Motor neuron (in vitro differentiated cells): ENCODE measurements at regions of chr17 and their contacts with region 1.

Region 1: GRCh38 chr17:66715745-66716156 is 119.2 kb upstream of the CACNG5 start:
- ATAC-seq: peak; percentile 57 to 88 (median 64)
- H3K4me3 ChIP-seq: no peak overlapping the region
- H3K27ac ChIP-seq: peak overlapping the region; percentile 59 to 77
- H3K4me1 ChIP-seq: peaks cover 48 to 50% of the 10 kb centered on the region in 2 donors

Region 2: DNA sequence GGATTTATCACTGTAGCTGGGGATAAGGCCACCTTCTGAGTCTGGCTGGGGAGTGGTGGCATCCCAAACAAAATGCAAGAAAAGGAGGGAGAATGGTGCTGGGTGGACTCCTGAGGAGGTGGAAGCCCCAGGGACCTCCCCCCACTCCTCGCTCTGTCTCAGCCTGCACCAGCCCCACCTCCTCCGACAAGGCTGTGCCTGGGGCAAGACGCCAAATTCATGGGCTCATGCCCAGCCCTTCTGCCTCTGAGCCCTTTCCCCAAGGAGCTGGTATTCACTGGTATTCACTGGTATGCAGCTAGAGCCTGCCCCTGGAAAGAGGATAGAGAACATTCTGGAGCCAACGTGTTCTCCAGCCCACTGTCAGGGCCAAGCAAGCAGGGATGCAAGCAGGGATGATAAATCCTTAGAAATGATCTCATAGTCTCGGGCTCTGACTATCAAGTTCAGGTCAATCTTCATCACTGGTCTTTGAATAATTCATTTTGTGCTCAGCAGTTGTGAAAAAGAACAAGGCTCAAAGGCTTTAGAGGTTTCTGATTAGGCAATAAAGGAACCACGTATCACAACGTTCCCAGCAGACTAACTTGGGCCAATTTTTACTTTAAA is 176.4 kb after region 1 on chr17:
- in situ Hi-C with region 1: loop called in 2 of 9 experiments (anchors 10 kb)
- ATAC-seq: peak; percentile 96 to 99 (median 98)
- H3K4me3 ChIP-seq: no peak overlapping the region
- H3K27ac ChIP-seq: peak overlapping the region; percentile 62 to 79
- H3K4me1 ChIP-seq: peaks cover 6 to 13% of the 10 kb centered on the region in 2 donors

Region 3: GRCh38 chr17:66906321-66907278 is 190.8 kb after region 1 on chr17:
- in situ Hi-C with region 1: loop called in 3 of 9 experiments (anchors 10 to 25 kb)
- ATAC-seq: peak in 7 of 8 experiments; percentile 33 to 69 (median 60)
- H3K4me3 ChIP-seq: no peak overlapping the region
- H3K27ac ChIP-seq: no peak overlapping the region
- H3K4me1 ChIP-seq: peaks cover 21 to 28% of the 10 kb centered on the region in 2 donors

Region 4: DNA sequence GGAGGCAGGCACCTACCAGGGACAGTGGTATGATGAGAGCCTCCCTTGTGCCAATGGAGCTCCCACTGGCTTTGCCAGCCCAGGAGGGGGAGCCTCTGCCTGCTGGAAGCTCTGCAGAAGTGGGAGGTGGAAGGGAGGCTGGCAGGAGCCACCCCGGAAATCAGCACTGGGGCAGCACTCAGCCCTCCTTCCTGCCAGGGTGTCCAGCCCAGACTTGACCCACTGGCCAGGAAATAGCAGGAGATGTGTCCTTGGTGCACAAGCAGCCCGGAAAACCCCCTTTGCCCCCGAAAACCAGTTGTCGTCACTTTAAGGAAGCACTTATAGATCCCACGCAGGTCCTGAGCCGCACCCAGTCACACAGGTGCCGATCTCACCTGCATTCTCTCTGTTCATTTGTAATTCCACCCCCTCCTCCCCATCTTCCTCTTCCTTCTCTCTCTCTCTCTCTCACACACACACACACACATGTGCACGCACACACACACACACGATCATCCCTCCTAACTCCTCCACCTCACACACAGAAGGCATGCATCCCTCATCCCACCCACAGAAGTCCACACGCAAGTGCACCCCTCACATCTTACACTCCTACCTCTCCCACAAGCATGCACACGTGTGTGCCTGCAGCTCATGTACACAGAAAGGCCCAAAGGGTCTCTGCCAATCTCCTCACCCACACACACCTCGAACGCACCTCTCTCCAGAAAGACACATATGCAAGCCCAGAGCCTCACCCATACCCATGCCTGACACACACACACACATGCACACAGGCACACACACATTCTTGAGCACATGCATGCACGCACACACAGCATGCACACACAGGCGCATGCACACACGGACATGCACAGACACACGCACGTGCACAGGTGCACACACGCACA is 199.7 kb after region 1 on chr17:
- in situ Hi-C with region 1: loop called in 2 of 9 experiments (anchors 10 to 25 kb)
- ATAC-seq: peak in 6 of 8 experiments; percentile 62 to 94 (median 72)
- H3K4me3 ChIP-seq: no peak overlapping the region
- H3K27ac ChIP-seq: no peak overlapping the region
- H3K4me1 ChIP-seq: peaks cover 13% of the 10 kb centered on the region in 2 donors